Head of caudate nucleus (tissue), 42 donors: ENCODE measurements at regions of chr15 and their contacts with region 1.

Region 1: DNA sequence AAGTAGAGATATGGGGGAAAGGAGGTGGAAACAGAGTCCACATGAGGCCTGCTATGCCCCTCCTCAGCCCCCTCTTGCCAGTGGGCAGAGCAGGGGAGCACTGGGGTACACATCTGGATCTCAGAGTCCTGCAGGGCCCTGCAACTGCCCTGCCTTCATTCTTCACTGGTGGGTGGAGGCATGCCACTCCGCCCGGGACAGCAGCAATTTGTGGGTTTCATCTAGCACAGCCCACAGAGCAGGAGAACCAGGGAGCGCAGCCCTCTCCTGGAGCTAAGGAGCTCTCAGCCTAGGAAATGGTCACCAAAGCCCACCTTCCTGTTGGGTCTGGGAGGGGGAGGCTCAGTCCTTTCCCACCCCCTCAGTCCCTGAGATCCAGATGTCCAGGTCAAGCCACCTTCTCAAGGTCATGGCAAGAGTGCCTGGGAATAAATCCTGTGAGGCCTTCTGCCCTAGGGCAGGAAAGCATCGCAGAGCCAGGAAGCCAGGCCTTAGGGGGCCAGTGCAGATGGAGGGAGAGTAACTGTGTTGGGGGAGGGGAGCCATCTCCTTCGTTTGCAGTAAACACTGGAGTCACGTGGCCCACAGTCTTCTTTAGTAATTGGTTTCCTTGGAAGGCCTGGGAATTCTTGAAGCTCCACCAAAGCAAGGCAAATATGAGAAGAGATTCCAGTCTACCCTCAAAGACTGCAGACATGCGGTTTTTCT is 31.0 kb downstream of the ANP32A start:
- DNase-seq: peak in 8 of 42 donors; percentile 25 to 70 (median 48)

Region 2: DNA sequence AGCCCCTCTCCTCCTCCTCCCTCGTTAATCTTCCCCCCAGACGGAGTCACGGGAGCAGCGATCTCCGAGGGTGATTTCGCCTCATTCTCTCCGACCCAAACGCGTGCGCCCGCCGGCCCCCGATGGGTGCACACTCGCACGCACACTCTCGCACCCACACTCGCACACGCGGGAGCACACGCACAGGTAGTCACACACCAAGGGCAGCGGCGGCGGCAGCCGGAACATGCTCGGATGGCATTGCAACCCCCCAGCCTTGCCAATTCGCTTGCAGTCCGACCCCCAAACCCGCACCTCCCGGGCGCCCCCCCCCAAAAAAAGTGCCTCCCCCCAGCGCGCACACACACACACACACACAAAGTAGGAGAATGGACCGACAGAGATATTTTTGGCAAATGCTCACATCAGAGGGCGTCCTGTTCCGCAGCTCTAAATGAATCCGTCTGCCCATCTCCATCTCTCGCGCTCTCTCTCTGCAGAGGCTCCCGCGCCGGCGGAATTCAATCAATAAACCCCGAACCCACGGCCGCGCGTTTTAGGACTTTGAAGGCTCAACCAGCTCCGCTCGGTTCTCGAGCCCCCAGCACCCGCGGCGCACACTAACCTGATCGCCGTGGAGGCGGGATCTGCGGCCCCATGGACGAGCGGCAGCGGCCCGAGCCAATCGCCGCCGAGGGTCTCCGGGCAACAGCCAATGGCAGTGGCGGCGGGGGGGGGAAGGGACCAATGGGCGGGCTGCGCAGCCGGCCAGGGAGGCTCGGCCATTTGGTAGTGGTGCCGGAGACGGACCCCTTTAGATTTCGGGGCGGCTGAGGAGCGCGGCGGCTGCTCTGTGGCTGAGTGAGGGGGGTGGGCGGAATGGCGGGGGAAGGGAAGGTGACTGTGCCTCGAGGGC is 30.9 kb after region 1 on chr15 and contains the start of gene ANP32A:
- intact Hi-C with region 1: loop called (anchors 5 kb)
- DNase-seq: peak; percentile 89 to 99 (median 96)